ENCODE measurements at regions of chr1 and their contacts with region 1.

Region 1: GRCh38 chr1:172745014-172745413 is 86.1 kb downstream of the FASLG start:
- DNase-seq: peak; percentile 91
- H3K4me3 Mint-ChIP-seq: peak overlapping the region; percentile 42
- H3K27ac Mint-ChIP-seq: peak overlapping the region; percentile 86
- H3K4me1 Mint-ChIP-seq: peaks cover 42% of the 10 kb centered on the region
- H3K27me3 Mint-ChIP-seq: no peaks in the 10 kb centered on the region
- CTCF ChIP-seq: peak; percentile 85

Region 2: DNA sequence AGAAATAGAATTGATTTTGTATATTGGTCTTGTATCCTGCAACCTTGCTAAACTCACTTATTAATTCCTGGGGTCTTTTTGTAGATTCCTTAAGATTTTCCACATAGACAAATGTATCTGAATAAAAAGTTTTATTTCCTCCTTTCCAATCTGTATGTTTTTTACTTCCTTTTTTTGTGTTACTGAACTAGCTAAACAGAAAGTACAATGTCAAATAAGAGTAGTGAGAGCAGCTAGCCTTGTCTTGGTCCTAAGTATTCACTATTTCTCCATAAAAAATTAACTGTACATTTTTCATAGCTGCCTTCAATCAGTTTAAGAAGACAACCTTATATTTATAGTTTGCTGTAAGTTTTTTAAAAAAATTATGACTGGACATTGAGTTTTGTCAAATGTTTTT is 11.2 kb before region 1 on chr1:
- CTCF ChIA-PET with region 1: interaction called, 97 read pairs
- POLR2A ChIA-PET with region 1: interaction called, 4 read pairs
- intact Hi-C with region 1: no loop called
- DNase-seq: no peak
- H3K4me3 Mint-ChIP-seq: no peak overlapping the region
- H3K27ac Mint-ChIP-seq: no peak overlapping the region
- H3K4me1 Mint-ChIP-seq: no peaks in the 10 kb centered on the region
- H3K27me3 Mint-ChIP-seq: no peaks in the 10 kb centered on the region
- CTCF ChIP-seq: no peak

Region 3: GRCh38 chr1:172837816-172838680 is 93.0 kb after region 1 on chr1:
- CTCF ChIA-PET with region 1: interaction called, 17 read pairs
- POLR2A ChIA-PET with region 1: interaction called, 3 read pairs
- intact Hi-C with region 1: no loop called
- DNase-seq: peak; percentile 90
- H3K4me3 Mint-ChIP-seq: no peak overlapping the region
- H3K27ac Mint-ChIP-seq: no peak overlapping the region
- H3K4me1 Mint-ChIP-seq: peaks cover 16% of the 10 kb centered on the region
- H3K27me3 Mint-ChIP-seq: no peaks in the 10 kb centered on the region
- CTCF ChIP-seq: no peak

Region 4: DNA sequence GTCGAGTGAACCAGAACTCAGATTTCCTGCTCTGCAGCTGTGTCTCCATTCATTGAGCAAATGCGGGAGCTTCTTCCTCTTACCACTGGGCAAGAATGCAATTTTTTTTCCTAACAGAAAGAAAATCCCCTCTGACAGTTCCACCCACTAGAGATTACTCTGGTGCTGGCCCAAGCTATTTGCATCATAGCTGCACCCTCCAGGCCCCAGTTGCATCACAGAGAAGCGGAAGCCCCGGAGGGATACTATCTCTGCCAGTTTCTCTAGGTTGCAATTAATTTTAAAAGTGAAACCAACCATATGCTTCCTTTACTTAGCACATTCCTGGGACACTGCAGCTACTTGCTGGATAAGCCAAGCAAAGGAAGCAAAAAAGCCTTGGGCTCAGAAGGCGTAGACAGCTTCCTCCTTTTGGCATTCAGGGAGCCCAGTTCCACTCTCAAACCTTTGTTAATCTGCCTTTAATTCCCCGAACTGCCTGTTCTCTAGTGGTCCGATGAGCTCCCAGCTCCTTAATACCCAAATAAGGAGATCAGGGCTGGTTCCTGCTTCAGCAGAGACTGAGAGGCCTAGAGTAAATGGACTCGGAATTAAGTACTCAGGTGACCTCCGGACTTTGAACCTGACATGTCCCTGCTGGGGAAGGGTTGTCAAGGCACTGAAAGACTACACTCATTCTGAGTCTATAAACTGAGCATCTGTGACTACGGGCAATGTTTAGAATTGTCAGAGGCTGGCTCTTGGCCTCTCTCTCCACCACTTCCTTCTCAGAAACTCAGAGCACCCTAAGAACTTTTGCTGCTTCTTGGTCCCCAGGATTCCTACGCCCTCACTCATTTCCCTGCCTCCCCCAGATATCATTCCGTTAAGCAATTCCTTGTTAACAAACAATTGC is 378.2 kb after region 1 on chr1:
- CTCF ChIA-PET with region 1: interaction called, 3 read pairs
- POLR2A ChIA-PET with region 1: interaction called, 11 read pairs
- intact Hi-C with region 1: no loop called
- DNase-seq: peak; percentile 98
- H3K4me3 Mint-ChIP-seq: peak overlapping the region; percentile 72
- H3K27ac Mint-ChIP-seq: peak overlapping the region; percentile 98
- H3K4me1 Mint-ChIP-seq: peaks cover 24% of the 10 kb centered on the region
- H3K27me3 Mint-ChIP-seq: no peaks in the 10 kb centered on the region
- CTCF ChIP-seq: no peak

Region 5: DNA sequence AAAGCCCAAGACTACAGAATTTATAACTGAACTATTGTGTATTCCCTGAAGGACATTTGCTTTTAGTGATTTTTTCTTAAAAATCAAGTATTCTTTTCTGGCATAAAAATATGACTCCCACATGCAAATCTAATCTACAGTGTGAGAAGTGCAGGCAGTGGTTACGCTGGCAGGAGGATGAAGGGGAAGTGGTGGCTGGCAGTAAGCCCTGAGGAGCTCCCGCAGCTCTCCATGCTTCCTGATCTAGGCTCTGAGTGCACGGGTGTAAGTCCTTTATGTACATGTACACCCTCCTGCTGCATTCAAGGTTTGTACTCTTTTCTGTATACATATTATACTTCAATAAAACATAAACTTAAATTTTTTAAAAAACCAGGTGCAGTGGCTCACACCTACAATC is 664.6 kb after region 1 on chr1:
- CTCF ChIA-PET with region 1: interaction called, 53 read pairs
- POLR2A ChIA-PET with region 1: no interaction called
- intact Hi-C with region 1: no loop called
- DNase-seq: peak; percentile 69
- H3K4me3 Mint-ChIP-seq: no peak overlapping the region
- H3K27ac Mint-ChIP-seq: peak overlapping the region; percentile 31
- H3K4me1 Mint-ChIP-seq: peaks cover 31% of the 10 kb centered on the region
- H3K27me3 Mint-ChIP-seq: no peaks in the 10 kb centered on the region
- CTCF ChIP-seq: no peak

Region 6: GRCh38 chr1:173988068-173988467 is 1243.1 kb after region 1 on chr1:
- CTCF ChIA-PET with region 1: interaction called, 12 read pairs
- POLR2A ChIA-PET with region 1: no interaction called
- intact Hi-C with region 1: no loop called
- DNase-seq: no peak
- H3K4me3 Mint-ChIP-seq: no peak overlapping the region
- H3K27ac Mint-ChIP-seq: no peak overlapping the region
- H3K4me1 Mint-ChIP-seq: peaks cover 6% of the 10 kb centered on the region
- H3K27me3 Mint-ChIP-seq: no peaks in the 10 kb centered on the region
- CTCF ChIP-seq: no peak

Measured in MCF 10A (cell line).